Mammary epithelial cell (primary cell): ENCODE measurements at regions of chr6 and their contacts with region 1.

Region 1: DNA sequence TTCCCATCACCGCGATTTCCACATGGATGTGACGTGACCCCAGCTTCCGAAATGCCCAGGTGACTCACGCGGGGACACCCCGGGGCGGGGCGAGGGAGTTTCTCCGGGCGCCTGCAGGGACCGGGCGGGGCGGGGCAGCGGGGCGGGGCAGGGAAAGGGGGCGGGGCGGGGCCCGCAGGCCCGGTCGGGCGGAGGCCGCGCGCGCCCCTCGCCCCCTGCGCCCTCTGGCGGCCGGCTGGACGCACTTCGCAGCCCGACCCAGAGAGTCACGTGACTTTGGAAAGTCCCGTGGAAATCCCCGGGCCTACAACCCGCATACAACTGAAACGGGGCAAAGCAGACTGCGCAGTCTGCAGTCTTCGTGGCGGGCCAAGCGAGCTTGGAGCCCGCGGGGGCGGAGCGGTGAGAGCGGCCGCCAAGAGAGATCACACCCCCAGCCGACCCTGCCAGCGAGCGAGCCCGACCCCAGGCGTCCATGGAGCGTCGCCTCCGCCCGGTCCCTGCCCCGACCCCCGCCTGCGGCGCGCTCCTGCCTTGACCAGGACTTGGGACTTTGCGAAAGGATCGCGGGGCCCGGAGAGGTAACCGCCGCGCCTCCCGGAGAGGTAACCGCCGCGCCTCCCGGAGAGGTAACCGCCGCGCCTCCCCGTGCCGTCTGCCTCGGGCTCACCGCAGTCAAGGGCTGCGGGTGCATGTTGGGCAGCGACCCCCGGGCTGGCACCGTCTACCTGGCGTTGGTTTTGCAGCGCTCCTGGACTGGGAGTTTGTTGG is at the start of gene TNFAIP3:
- DNase-seq: peak; percentile 95
- H3K4me3 ChIP-seq: peak within 1 kb of the TSS; percentile 75 to 94 (median 94)
- H3K27ac ChIP-seq: peak within 1 kb of the TSS; percentile 95
- H3K4me1 ChIP-seq: peaks cover 44% of the 10 kb centered on the region
- H3K27me3 ChIP-seq: no peaks in the 10 kb centered on the region
- CTCF ChIP-seq: peak; percentile 55 to 66
- total RNA-seq, gene TNFAIP3: 5.2 to 117 TPM

Region 2: GRCh38 chr6:137233911-137234863 is 632.9 kb before region 1 on chr6:
- CTCF ChIA-PET with region 1: no interaction called
- dilution Hi-C with region 1: no loop called
- in situ Hi-C with region 1: no loop called
- intact Hi-C with region 1: no loop called
- DNase-seq: peak; percentile 85
- H3K4me3 ChIP-seq: no peak overlapping the region
- H3K27ac ChIP-seq: peak overlapping the region; percentile 24
- H3K4me1 ChIP-seq: peaks cover 41% of the 10 kb centered on the region
- H3K27me3 ChIP-seq: no peaks in the 10 kb centered on the region
- CTCF ChIP-seq: no peak

Region 3: DNA sequence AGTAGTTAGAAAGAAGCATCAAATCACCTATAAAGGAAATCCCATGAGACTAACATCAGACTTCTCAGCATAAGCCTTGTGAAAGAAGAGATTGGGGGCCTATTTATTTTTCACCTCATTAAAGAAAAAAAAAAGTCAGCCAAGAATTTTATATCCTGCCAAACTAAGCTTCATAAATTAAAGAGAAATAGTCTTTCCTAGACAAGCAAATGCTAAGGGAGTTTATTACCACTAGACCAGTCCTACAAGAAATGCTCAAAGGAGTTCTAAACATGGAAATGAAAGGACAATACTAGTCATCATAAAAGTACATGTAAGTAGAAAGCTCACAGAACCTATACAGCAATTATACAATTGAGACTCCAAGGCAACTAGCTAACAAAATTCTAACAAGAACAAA is 276.4 kb before region 1 on chr6:
- CTCF ChIA-PET with region 1: no interaction called
- dilution Hi-C with region 1: no loop called
- in situ Hi-C with region 1: no loop called
- intact Hi-C with region 1: no loop called
- DNase-seq: no peak
- H3K4me3 ChIP-seq: no peak overlapping the region
- H3K27ac ChIP-seq: no peak overlapping the region
- H3K4me1 ChIP-seq: no peaks in the 10 kb centered on the region
- H3K27me3 ChIP-seq: no peaks in the 10 kb centered on the region
- CTCF ChIP-seq: no peak

Region 4: DNA sequence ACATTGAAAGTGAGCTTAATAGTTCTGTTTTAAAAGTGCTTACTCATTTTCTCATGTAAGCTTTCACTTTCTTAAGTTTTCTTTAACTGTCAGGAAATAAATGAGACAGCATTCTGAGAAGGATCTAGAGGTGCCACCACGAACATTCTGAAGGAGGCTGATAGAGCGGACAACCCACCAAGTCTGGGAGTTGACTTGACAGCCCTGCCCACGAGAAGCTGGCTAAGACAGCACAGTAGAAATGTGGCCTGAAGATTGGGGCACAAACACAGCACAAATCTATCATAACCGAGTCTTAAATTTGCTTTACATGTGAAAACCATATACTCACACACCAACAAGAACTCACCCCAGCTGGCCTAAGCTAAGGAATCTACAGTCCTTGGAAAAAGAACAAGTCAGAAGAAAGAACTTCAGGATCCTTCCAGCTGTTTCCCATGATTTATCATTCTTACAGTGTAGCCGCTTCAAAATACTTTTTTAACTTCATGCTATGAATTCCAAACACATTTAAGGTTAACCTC is 144.3 kb before region 1 on chr6:
- CTCF ChIA-PET with region 1: interaction called, 16 read pairs
- dilution Hi-C with region 1: no loop called
- in situ Hi-C with region 1: no loop called
- intact Hi-C with region 1: no loop called
- DNase-seq: no peak
- H3K4me3 ChIP-seq: no peak overlapping the region
- H3K27ac ChIP-seq: no peak overlapping the region
- H3K4me1 ChIP-seq: peaks cover 18% of the 10 kb centered on the region
- H3K27me3 ChIP-seq: no peaks in the 10 kb centered on the region
- CTCF ChIP-seq: no peak

Region 5: DNA sequence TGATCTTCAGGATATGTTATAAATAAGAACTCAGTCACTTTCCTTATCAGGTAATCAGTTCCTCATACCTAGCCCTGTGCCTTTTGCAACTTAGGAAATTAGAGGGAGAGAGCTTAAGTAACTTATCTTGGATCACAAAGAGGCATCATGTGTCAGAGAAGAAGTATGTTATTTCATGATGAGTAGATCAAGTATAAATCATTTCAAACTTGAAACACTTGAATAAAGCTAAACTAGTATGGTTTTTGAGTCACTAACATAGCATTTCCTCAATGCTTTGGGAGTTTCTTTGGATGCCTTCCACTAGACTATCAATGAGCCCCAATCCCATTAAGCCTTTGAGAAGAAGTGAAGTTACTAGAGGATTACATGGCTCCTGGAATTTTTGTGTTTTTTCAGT is 102.6 kb before region 1 on chr6:
- CTCF ChIA-PET with region 1: no interaction called
- dilution Hi-C with region 1: no loop called
- in situ Hi-C with region 1: no loop called
- intact Hi-C with region 1: loop called (anchors 1 kb)
- DNase-seq: peak; percentile 92
- H3K4me3 ChIP-seq: no peak overlapping the region
- H3K27ac ChIP-seq: peak overlapping the region; percentile 83
- H3K4me1 ChIP-seq: peaks cover 41% of the 10 kb centered on the region
- H3K27me3 ChIP-seq: no peaks in the 10 kb centered on the region
- CTCF ChIP-seq: no peak

Region 6: DNA sequence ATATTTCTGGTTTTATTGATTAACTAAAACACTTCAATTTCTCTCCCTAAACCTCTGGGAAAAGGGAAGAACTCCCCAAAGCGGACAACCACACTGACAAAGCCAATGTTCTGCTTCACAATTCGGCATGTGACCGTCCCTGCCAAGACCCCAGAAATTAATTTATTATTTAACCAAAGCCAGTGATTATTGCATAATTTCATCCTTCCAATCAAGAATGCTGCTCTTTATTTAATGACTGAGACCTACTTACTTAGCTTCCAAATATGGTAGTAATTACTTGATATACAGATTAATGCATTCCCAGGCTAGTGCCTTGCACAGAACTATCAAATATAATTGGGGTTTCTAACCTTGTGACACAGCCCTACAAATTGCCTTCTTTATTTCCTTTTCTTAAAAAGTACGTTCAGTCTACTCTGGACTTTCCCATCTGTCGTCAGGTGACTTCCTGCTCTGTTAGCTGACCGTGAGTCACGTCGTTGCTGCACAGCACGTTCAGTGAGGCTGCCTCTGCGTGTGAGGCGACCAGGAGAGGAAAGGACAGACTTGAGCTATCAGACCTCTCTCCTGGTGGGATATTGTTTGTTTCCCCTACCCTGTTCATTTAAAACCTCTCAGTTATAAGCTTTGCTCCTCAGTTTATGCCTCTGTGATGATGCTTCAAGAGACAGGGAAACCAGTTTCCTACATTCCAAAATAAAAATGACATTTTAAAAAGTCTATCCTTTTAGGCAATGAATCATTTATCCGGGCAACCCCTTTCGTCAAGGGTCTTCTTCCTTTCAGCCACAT is 55.8 kb before region 1 on chr6:
- CTCF ChIA-PET with region 1: no interaction called
- dilution Hi-C with region 1: loop called (anchors 5 kb)
- in situ Hi-C with region 1: no loop called
- intact Hi-C with region 1: loop called (anchors 1 kb)
- DNase-seq: peak; percentile 93
- H3K4me3 ChIP-seq: no peak overlapping the region
- H3K27ac ChIP-seq: peak overlapping the region; percentile 89
- H3K4me1 ChIP-seq: peaks cover 48% of the 10 kb centered on the region
- H3K27me3 ChIP-seq: no peaks in the 10 kb centered on the region
- CTCF ChIP-seq: no peak

Region 7: GRCh38 chr6:137845455-137845854 is 21.6 kb before region 1 on chr6:
- CTCF ChIA-PET with region 1: no interaction called
- dilution Hi-C with region 1: no loop called
- in situ Hi-C with region 1: no loop called
- intact Hi-C with region 1: loop called (anchors 1 kb)
- DNase-seq: no peak
- H3K4me3 ChIP-seq: no peak overlapping the region
- H3K27ac ChIP-seq: no peak overlapping the region
- H3K4me1 ChIP-seq: peaks cover 5% of the 10 kb centered on the region
- H3K27me3 ChIP-seq: no peaks in the 10 kb centered on the region
- CTCF ChIP-seq: peak in 1 of 2 donors; percentile 45

Region 8: DNA sequence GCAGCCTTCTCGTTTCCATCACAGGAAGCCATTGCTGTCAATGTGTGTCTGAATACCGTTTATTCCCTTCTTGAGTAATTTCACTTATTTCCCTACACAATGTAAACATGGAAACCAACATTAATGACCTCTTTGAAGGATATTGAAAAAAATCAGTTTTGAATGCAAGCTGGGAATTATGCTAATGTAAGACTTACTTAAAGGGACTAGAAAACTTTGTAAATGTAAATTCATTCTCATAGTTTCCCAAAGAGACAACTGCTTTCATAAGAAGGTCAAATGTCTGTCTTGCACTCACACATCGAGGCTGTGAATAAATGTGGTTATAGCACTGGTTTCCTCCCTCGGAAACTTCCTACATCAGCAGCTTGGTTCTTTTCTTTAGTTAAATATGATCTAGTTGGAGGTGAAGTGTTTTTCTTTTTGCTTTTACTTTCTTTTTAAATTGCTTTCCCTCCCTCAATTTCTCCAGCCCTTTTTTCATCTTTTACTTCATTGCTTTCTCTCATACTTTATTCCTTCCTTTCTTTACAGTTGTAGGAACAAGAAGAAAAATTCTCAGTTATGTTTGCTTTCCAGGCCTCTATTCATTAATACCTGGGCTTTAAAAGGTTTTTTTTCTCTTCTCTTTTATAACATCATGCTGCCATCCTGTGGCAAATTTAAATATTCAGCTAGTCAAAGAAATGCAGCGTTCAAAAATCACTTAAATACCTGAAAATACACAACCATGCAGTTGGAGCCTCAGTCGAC is 108.3 kb after region 1 on chr6:
- CTCF ChIA-PET with region 1: no interaction called
- dilution Hi-C with region 1: no loop called
- in situ Hi-C with region 1: no loop called
- intact Hi-C with region 1: loop called (anchors 1 kb)
- DNase-seq: no peak
- H3K4me3 ChIP-seq: no peak overlapping the region
- H3K27ac ChIP-seq: no peak overlapping the region
- H3K4me1 ChIP-seq: peaks cover 4% of the 10 kb centered on the region
- H3K27me3 ChIP-seq: no peaks in the 10 kb centered on the region
- CTCF ChIP-seq: peak; percentile 31 to 43